ENCODE measurements at regions of chr3 and their contacts with region 1.

Region 1: GRCh38 chr3:195613468-195614069 is 29.8 kb upstream of the APOD start:
- DNase-seq: no peak
- H3K4me3 ChIP-seq: no peak overlapping the region
- H3K27ac ChIP-seq: no peak overlapping the region
- H3K4me1 ChIP-seq: peaks cover 6% of the 10 kb centered on the region
- H3K27me3 ChIP-seq: no peaks in the 10 kb centered on the region
- CTCF ChIP-seq: no peak
- EP300 ChIP-seq: no peak
- POLR2A ChIP-seq: no peak

Region 2: DNA sequence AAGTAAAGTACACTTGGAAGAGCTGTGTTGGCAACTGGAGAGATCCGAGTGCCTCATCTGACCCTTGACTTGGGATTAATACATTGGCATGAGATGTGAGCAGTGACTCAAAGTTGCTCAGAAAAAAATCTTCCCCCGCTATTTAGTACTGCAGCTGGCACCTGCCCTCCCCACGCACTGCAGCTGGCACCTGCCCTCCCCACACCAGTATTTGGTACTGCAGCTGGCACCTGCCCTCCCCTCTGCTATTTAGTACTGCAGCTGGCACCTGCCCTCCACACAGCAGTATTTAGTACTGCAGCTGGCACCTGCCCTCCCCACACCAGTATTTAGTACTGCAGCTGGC is 103.3 kb after region 1 on chr3:
- intact Hi-C with region 1: loop called in 1 of 4 experiments (anchors 2 kb)
- DNase-seq: no peak
- H3K4me3 ChIP-seq: no peak overlapping the region
- H3K27ac ChIP-seq: no peak overlapping the region
- H3K4me1 ChIP-seq: no peaks in the 10 kb centered on the region
- H3K27me3 ChIP-seq: no peaks in the 10 kb centered on the region
- CTCF ChIP-seq: no peak
- EP300 ChIP-seq: no peak
- POLR2A ChIP-seq: no peak

Region 3: GRCh38 chr3:195727606-195728195 is 114.1 kb after region 1 on chr3:
- intact Hi-C with region 1: loop called in 1 of 4 experiments (anchors 2 kb)
- DNase-seq: no peak
- H3K4me3 ChIP-seq: no peak overlapping the region
- H3K27ac ChIP-seq: no peak overlapping the region
- H3K4me1 ChIP-seq: no peaks in the 10 kb centered on the region
- H3K27me3 ChIP-seq: no peaks in the 10 kb centered on the region
- CTCF ChIP-seq: no peak
- EP300 ChIP-seq: no peak
- POLR2A ChIP-seq: no peak

Measured in ovary (tissue), 10 donors.